Heart left ventricle (tissue), 16 donors: ENCODE measurements at regions of chr1 and their contacts with region 1.

Region 1: GRCh38 chr1:218568962-218569550 is 223.9 kb downstream of the TGFB2 start:
- DNase-seq: no peak
- ATAC-seq: no peak
- H3K4me3 ChIP-seq: no peak overlapping the region
- H3K27ac ChIP-seq: no peak overlapping the region
- H3K4me1 ChIP-seq: no peaks in the 10 kb centered on the region
- H3K27me3 ChIP-seq: no peaks in the 10 kb centered on the region
- CTCF ChIP-seq: no peak
- POLR2A ChIP-seq: no peak

Region 2: DNA sequence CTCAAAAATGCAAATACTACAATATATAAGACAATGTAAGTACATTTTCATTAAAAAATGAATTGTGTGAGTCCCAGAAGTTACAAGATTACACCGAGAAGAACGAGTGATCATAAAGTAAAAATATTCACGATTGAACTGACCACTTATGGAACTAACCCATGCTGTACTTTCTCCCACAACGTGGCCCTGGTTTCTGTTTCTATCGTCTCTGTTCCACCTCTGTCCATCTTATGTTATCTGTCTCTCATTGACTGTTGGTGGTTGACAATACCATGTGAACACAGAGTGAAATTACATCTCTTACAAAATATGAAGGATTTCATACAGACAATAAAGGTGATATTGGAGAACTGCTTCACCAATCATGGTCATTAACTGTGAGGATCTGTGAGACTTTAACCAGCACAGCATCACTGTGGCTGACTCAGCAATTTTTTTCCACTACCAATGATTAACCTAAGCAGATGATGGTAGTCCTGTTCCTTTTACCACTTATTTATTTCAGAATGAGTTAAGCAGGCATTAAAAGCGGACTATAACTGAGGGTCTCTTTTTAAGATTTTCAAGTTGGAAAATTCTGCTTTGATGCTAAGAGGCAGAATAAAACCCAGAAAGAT is 58.8 kb before region 1 on chr1:
- intact Hi-C with region 1: no loop called
- DNase-seq: no peak
- ATAC-seq: no peak
- H3K4me3 ChIP-seq: no peak overlapping the region
- H3K27ac ChIP-seq: no peak overlapping the region
- H3K4me1 ChIP-seq: no peaks in the 10 kb centered on the region
- H3K27me3 ChIP-seq: no peaks in the 10 kb centered on the region
- CTCF ChIP-seq: no peak
- POLR2A ChIP-seq: no peak

Region 3: DNA sequence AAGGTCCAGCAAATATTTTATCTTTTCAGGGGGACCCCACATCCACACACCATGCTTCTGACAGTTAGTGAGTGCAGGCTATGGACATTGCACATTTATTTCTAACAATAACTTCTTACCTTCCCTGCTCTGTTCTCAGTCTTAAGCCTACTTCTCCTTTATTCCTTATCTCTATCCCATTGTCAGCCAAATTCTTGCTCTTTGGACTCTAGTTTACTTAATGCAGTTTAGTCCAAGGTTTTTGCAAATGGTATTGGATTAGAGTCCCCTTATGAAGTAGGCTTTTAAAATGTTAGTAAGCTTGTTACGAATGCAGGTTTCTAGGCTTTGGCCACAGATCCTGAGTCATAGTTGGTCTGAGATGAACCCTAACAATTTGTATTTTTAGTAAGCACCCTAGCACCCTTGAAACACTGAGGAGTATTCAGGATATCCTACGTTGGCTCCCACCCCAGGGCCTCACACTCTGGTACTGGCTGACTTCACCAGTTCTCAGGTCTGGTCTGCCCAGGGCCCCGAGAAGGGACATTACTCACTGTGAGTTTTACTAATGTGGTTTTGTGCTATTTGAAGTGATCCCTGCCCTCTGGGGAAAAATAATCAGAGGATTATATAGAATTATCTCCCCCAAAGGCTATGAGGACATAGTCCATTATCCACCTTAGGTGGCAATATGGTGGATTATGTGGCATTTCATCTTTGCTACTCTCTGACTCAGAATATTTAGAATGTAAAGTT is 15.5 kb after region 1 on chr1:
- intact Hi-C with region 1: no loop called
- DNase-seq: no peak
- ATAC-seq: no peak
- H3K4me3 ChIP-seq: no peak overlapping the region
- H3K27ac ChIP-seq: no peak overlapping the region
- H3K4me1 ChIP-seq: peaks cover 0 to 24% (median 5%) of the 10 kb centered on the region in 12 donors
- H3K27me3 ChIP-seq: no peaks in the 10 kb centered on the region
- CTCF ChIP-seq: no peak
- POLR2A ChIP-seq: no peak

Region 4: DNA sequence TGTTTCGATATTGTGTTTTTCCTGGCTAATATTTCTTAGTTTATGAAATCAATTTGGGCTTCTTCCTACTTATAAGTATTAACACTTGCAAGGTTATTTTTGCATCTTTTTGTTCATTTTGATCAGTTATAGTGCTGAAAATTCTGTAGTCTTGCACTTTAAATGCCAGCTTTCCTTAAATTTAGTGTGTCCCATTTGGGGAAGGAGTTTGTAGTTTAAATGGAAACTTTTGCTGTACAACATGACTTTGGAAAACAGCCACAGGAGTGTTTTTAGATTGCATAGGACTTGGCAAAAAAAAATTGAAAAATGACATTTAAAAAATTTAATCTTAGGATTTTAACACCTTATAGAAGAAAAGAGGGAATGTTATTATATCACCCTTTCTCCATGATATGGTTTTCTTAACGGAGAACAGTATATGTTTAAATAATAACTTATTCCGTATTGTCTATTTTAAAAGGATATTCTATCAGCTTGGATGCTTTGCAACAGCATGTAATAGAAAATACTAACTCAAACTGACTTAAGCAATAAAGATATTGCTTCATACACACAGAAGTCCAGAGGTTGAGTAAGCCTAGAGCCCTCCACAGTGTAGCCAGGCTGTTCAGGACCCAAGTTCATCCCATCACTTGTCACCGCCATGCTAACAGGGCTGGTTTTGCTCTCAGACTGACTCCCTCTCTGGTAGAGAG is 658.5 kb after region 1 on chr1:
- intact Hi-C with region 1: loop called in 1 of 10 experiments (anchors 5 kb)
- DNase-seq: no peak
- ATAC-seq: no peak
- H3K4me3 ChIP-seq: no peak overlapping the region
- H3K27ac ChIP-seq: no peak overlapping the region
- H3K4me1 ChIP-seq: peaks cover 0 to 12% (median 0%) of the 10 kb centered on the region in 12 donors
- H3K27me3 ChIP-seq: no peaks in the 10 kb centered on the region
- CTCF ChIP-seq: no peak
- POLR2A ChIP-seq: no peak